Activated CD4-positive, alpha-beta T cell treated with anti-CD3 and anti-CD28 coated beads for 36 hours (primary cell): ENCODE measurements at regions of chr3 and their contacts with region 1.

Region 1: DNA sequence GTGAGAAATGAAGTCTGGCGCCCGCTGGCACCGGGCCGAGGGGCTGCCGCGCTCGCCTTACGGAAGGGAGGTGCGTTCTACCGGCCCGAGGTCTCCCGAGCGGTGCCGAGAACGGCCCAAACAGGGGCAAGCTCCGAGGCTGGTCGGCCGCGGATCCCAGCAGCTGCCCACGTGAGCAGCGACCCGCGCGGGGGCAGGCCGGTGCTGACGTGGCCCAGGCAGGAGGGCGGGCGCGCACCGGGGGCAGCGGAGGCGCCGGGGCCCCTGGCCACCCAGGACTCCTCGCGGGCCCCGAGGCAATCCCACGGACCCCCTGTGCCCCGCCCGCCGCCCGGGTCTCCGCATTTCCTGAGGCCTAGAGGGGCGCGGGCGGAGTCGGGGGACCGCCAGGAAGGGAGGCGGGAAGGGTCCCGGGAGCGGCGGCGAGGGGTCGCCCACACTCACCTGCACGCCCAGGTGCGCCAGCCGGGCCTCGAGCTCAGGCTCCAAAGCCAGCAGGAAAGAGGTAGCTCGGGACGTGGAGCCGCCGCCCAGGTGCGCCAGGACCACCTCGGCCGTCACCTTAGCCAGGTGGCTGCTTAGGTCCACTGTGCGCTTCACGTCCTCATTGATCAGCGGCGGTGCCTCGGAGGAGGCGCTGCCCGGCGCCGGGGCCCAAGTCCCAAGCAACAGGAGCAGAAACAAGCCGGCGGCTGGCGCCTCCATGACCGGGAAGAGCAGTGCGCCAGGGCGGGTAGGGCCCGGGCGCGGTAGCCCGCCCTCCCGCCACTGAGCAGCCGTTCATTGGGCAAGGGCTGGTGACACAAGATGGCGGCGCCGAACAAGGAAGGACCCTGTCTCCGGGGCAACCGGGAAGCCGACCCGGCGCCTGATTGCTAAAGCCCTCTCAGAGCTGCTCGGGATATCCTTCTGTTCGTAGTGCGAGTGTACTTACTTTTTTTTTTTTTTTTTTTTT is at the start of gene RPN1:
- DNase-seq: peak; percentile 97
- ATAC-seq: peak; percentile 97
- H3K4me3 Mint-ChIP-seq: peak within 1 kb of the TSS; percentile 81
- H3K27ac Mint-ChIP-seq: peak within 1 kb of the TSS; percentile 85
- H3K4me1 Mint-ChIP-seq: peaks cover 39% of the 10 kb centered on the region
- H3K27me3 Mint-ChIP-seq: no peaks in the 10 kb centered on the region
- total RNA-seq, gene RPN1: 138 to 153 TPM

Region 2: DNA sequence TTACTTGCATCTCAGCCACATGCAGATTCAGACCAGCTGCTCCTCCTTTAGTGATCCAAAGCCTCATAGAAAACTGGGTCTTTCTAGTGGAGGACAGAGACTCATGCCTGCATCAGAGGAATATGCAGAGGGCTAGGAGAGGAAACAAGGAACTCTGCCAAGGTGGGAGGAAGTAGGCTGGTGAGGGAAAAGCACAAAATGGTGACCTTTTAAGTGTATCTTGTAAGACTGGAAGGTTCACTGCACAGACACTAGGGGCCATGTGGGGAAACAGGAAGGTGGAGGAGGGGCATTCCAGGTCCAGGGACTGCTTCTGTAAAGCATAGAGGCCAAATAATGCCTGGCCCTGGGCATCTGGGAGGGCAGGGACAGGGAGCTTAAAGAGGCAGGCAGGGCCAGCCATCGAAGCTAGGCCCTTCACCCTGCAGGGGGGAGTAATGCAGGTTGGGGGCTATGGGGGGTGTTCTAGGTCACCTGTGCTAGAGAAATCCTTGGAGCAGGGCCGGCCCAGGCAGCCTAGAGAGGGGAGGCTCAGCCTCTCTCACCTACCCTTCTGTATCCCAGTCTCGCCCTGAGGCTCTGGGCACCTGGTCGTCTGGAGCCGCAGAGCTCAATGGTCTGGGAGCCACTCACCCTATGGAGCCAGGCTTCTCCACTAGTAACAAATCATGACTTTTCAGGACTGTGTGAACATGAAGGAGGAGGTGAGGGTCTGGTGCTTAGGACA is 301.4 kb before region 1 on chr3:
- CTCF ChIA-PET with region 1: no interaction called
- POLR2A ChIA-PET with region 1: no interaction called
- intact Hi-C with region 1: no loop called
- DNase-seq: no peak
- ATAC-seq: no peak
- H3K4me3 Mint-ChIP-seq: no peak overlapping the region
- H3K27ac Mint-ChIP-seq: no peak overlapping the region
- H3K4me1 Mint-ChIP-seq: peaks cover 5% of the 10 kb centered on the region
- H3K27me3 Mint-ChIP-seq: no peaks in the 10 kb centered on the region

Region 3: GRCh38 chr3:128426128-128426921 is 224.0 kb before region 1 on chr3:
- CTCF ChIA-PET with region 1: no interaction called
- POLR2A ChIA-PET with region 1: no interaction called
- intact Hi-C with region 1: no loop called
- DNase-seq: peak; percentile 75
- ATAC-seq: peak; percentile 91
- H3K4me3 Mint-ChIP-seq: no peak overlapping the region
- H3K27ac Mint-ChIP-seq: no peak overlapping the region
- H3K4me1 Mint-ChIP-seq: no peaks in the 10 kb centered on the region
- H3K27me3 Mint-ChIP-seq: peaks cover 18% of the 10 kb centered on the region

Region 4: DNA sequence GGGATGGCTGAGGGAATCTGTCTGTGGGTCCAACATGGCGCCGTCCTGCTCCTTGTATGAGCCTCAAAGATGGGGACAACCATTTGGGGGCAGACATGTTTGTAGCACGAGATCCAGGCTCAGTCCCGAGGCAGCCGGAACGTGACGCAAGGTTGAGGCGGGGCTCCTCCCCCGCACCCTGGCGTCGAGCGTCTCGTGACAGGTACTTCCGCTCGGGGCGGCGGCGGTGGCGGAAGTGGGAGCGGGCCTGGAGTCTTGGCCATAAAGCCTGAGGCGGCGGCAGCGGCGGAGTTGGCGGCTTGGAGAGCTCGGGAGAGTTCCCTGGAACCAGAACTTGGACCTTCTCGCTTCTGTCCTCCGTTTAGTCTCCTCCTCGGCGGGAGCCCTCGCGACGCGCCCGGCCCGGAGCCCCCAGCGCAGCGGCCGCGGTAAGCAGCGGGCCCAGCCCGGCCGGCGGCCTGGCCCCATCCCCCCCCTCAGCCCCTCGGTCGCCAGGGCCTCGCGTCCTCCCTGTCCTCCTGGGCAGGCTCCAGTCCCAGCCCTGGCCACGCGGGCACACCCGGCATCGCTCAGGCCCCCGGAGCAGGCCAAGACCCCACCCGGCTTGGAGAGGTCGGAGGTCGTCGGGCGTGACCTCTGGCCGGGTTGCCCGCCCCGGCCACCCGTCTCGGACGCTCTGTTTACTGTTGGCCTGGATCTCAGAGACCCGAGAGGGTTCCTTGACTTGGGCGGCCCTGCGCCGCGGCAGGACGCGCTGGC is 75.7 kb after region 1 on chr3 and contains the start of gene RAB7A:
- CTCF ChIA-PET with region 1: interaction called, 3 read pairs
- POLR2A ChIA-PET with region 1: interaction called, 7 read pairs
- intact Hi-C with region 1: loop called (anchors 1 to 2 kb)
- DNase-seq: peak; percentile 99
- ATAC-seq: peak; percentile 92
- H3K4me3 Mint-ChIP-seq: peak within 1 kb of the TSS; percentile 89
- H3K27ac Mint-ChIP-seq: peak within 1 kb of the TSS; percentile 92
- H3K4me1 Mint-ChIP-seq: peaks cover 52% of the 10 kb centered on the region
- H3K27me3 Mint-ChIP-seq: no peaks in the 10 kb centered on the region
- total RNA-seq, gene RAB7A: 297 to 534 TPM

Region 5: GRCh38 chr3:128794770-128795649 is 144.6 kb after region 1 on chr3:
- CTCF ChIA-PET with region 1: interaction called, 5 read pairs
- POLR2A ChIA-PET with region 1: interaction called, 4 read pairs
- intact Hi-C with region 1: loop called in 1 of 2 experiments (anchors 1 kb)
- DNase-seq: peak; percentile 76
- ATAC-seq: peak; percentile 68
- H3K4me3 Mint-ChIP-seq: peak overlapping the region; percentile 37
- H3K27ac Mint-ChIP-seq: peak overlapping the region; percentile 95
- H3K4me1 Mint-ChIP-seq: peaks cover 91% of the 10 kb centered on the region
- H3K27me3 Mint-ChIP-seq: no peaks in the 10 kb centered on the region

Region 6: GRCh38 chr3:128804017-128804810 is 153.8 kb after region 1 on chr3:
- CTCF ChIA-PET with region 1: interaction called, 3 read pairs
- POLR2A ChIA-PET with region 1: interaction called, 4 read pairs
- intact Hi-C with region 1: loop called in 1 of 2 experiments (anchors 1 kb)
- DNase-seq: peak; percentile 78
- ATAC-seq: peak; percentile 76
- H3K4me3 Mint-ChIP-seq: peak overlapping the region; percentile 69
- H3K27ac Mint-ChIP-seq: peak overlapping the region; percentile 97
- H3K4me1 Mint-ChIP-seq: peaks cover 86% of the 10 kb centered on the region
- H3K27me3 Mint-ChIP-seq: no peaks in the 10 kb centered on the region

Region 7: DNA sequence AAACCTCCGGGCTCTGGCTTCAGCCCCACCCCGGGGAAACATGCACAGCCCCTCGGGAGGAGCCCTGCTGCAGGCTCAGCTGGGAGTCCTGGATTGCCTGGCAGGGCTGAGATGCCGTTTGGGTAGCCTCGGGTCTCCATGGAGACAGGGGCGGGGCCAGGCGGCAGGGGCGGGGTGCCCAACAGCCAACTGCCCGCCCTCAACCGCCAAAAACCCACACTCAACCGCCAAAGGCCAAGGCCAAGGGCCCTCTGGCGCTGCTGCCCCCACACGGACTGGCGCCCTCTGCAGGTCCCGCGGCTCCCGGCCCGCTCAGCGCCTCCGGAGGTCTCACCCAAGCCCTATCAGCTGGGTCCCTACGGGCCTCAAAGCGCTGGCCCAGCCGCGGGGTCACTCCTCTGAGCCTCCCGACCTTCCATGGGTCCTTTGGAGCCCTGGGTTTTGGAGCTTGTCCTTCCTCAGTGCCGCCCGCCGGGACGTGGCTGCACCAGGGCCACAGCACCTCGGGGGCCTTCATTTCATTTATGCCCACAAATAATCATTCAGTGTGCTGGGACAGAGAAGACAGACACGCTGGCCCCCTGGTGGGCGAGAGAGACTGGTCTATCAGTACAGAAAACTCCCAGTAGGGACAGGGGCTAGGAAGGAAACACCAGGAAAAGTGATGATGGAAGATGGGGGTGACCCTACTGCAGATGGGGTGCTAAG is 195.6 kb after region 1 on chr3:
- CTCF ChIA-PET with region 1: interaction called, 3 read pairs
- POLR2A ChIA-PET with region 1: no interaction called
- intact Hi-C with region 1: loop called in 1 of 2 experiments (anchors 1 kb)
- DNase-seq: peak; percentile 93
- ATAC-seq: peak; percentile 84
- H3K4me3 Mint-ChIP-seq: peak overlapping the region; percentile 62
- H3K27ac Mint-ChIP-seq: peak overlapping the region; percentile 95
- H3K4me1 Mint-ChIP-seq: peaks cover 20% of the 10 kb centered on the region
- H3K27me3 Mint-ChIP-seq: no peaks in the 10 kb centered on the region

Region 8: DNA sequence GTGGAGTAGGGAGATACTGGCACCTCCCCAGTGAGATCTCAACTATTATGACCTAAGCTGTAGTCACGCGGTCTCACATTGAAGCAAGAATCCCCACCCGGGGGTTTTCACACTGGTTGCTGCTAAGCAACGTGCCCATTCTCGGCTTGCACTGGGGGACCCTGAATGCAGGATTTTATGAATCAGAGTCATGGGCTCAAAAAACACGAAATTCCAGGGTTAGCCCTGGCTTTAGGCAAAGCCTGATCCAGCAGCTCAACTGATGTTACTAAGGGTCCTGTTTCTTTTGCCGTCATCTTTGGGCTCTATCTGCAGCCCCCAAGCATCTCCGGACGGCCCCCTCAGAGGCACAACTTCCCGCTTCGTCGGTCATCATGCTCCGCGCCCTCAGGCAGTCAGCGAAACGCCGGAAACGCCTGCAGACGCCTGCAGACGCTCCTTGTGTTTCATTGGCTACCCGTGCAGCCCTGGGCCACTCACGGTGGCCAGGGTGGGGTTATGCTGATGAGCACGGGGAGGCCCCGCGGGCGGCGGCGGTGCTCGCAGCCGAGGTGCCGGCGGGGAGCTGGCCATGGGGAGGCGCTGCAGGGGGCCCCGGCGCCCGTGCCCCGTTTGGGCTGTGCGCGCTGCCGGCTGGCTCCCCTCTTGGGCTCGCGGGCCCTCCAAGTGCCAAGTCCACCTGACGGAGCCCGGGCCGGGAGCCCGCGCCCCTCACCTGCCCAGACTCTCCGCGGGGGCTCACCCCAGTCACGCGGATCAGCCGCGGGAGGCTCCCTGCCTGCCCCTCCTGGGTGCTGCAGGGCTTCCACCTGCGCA is 376.6 kb after region 1 on chr3:
- CTCF ChIA-PET with region 1: no interaction called
- POLR2A ChIA-PET with region 1: no interaction called
- intact Hi-C with region 1: loop called in 1 of 2 experiments (anchors 1 kb)
- DNase-seq: peak; percentile 96
- ATAC-seq: peak; percentile 100
- H3K4me3 Mint-ChIP-seq: peak overlapping the region; percentile 72
- H3K27ac Mint-ChIP-seq: peak overlapping the region; percentile 81
- H3K4me1 Mint-ChIP-seq: peaks cover 12% of the 10 kb centered on the region
- H3K27me3 Mint-ChIP-seq: no peaks in the 10 kb centered on the region

Region 9: DNA sequence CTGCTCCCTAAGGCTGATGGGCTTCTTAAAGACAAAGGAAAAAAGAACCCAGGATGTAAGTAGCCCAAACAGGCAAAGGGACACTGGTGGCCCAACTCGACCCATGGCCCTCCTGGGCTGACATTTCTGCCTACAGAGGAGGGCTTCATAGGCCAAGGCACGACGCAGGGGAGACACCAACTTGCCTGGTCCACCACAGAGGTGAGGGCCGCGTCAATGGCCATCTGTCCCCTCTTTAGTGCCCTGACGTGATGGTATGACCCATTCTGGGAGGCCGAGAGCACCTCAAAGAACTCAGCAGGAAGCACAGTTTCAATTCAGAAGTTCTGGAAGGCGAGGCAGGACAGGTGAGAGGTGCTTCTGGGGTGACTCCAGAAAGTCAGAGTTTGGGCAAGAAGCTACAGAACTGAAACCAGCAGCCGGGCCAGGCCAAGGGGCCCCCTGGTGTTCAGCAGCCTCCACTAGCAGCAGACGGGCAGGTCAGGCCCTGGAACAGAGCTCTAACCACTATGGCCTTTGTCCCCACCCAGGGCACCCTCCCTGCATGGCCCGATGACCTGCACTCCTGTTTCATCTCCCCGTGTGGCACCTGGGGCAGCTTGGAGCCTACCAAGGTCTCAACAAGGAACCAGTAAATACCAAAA is 673.4 kb after region 1 on chr3:
- CTCF ChIA-PET with region 1: no interaction called
- POLR2A ChIA-PET with region 1: no interaction called
- intact Hi-C with region 1: no loop called
- DNase-seq: no peak
- ATAC-seq: no peak
- H3K4me3 Mint-ChIP-seq: no peak overlapping the region
- H3K27ac Mint-ChIP-seq: no peak overlapping the region
- H3K4me1 Mint-ChIP-seq: no peaks in the 10 kb centered on the region
- H3K27me3 Mint-ChIP-seq: no peaks in the 10 kb centered on the region

Region 10: GRCh38 chr3:129399145-129399894 is 748.9 kb after region 1 on chr3:
- CTCF ChIA-PET with region 1: no interaction called
- POLR2A ChIA-PET with region 1: no interaction called
- intact Hi-C with region 1: loop called in 1 of 2 experiments (anchors 5 kb)
- DNase-seq: peak; percentile 90
- ATAC-seq: peak; percentile 82
- H3K4me3 Mint-ChIP-seq: peak overlapping the region; percentile 99
- H3K27ac Mint-ChIP-seq: peak overlapping the region; percentile 98
- H3K4me1 Mint-ChIP-seq: peaks cover 29% of the 10 kb centered on the region
- H3K27me3 Mint-ChIP-seq: no peaks in the 10 kb centered on the region